Mammary epithelial cell (primary cell): ENCODE measurements at regions of chr19 and their contacts with region 1.

Region 1: DNA sequence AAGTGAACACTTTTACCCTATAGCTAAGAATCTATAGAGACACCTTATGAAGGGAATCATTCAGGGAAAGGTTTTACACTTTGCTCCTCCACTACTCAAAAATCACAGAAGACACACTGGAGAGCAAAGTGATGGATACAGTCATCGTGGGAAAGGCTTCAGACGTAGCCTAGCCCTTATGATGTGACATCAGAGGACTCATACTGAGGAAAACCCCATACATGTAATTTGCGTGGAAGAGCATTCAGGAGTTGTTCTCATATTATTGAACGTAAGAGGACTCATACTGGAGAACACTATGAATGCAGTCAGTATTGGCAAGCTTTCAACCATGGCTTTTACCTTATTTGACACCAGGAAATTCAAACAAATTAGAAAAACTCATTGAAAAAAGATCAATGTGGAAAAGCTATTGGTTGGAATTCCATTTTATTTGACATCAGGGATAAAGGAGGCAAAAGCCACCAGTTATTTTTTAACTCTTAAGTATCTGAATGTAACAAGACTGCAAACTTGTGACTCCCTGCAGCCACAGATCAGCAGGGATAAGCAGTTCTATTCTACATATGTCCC is 16.1 kb upstream of the ZNF274 start:
- DNase-seq: no peak
- H3K4me3 ChIP-seq: no peak overlapping the region
- H3K27ac ChIP-seq: no peak overlapping the region
- H3K4me1 ChIP-seq: no peaks in the 10 kb centered on the region
- H3K27me3 ChIP-seq: no peaks in the 10 kb centered on the region
- CTCF ChIP-seq: no peak

Region 2: GRCh38 chr19:58059671-58060078 is 107.1 kb before region 1 on chr19:
- CTCF ChIA-PET with region 1: no interaction called
- dilution Hi-C with region 1: loop called (anchors 5 kb)
- in situ Hi-C with region 1: no loop called
- intact Hi-C with region 1: no loop called
- DNase-seq: no peak
- H3K4me3 ChIP-seq: peak overlapping the region in 1 of 3 experiments; percentile 25
- H3K27ac ChIP-seq: no peak overlapping the region
- H3K4me1 ChIP-seq: no peaks in the 10 kb centered on the region
- H3K27me3 ChIP-seq: no peaks in the 10 kb centered on the region
- CTCF ChIP-seq: no peak